CD8-positive, alpha-beta T cell (primary cell): ENCODE measurements at regions of chr11 and their contacts with region 1.

Region 1: GRCh38 chr11:130213143-130213978 is 53.8 kb downstream of the ST14 start:
- DNase-seq: peak; percentile 43 to 87 (median 71)
- ATAC-seq: peak; percentile 98
- H3K4me3 ChIP-seq: no peak overlapping the region
- H3K4me3 Mint-ChIP-seq: no peak overlapping the region
- H3K27ac ChIP-seq: no peak overlapping the region
- H3K27ac Mint-ChIP-seq: no peak overlapping the region
- H3K4me1 ChIP-seq: no peaks in the 10 kb centered on the region
- H3K4me1 Mint-ChIP-seq: no peaks in the 10 kb centered on the region
- H3K27me3 ChIP-seq: peaks cover 0 to 3% of the 10 kb centered on the region in 2 experiments
- H3K27me3 Mint-ChIP-seq: peaks cover 6% of the 10 kb centered on the region
- CTCF ChIP-seq: peak; percentile 97

Region 2: GRCh38 chr11:129992161-129992944 is 221.0 kb before region 1 on chr11:
- CTCF ChIA-PET with region 1: no interaction called
- POLR2A ChIA-PET with region 1: no interaction called
- intact Hi-C with region 1: loop called in 1 of 2 experiments (anchors 5 kb)
- DNase-seq: peak in 6 of 9 experiments; percentile 20 to 63 (median 48)
- ATAC-seq: peak; percentile 91
- H3K4me3 ChIP-seq: no peak overlapping the region
- H3K4me3 Mint-ChIP-seq: no peak overlapping the region
- H3K27ac ChIP-seq: no peak overlapping the region
- H3K27ac Mint-ChIP-seq: peak overlapping the region; percentile 46
- H3K4me1 ChIP-seq: no peaks in the 10 kb centered on the region
- H3K4me1 Mint-ChIP-seq: peaks cover 10% of the 10 kb centered on the region
- H3K27me3 ChIP-seq: no peaks in the 10 kb centered on the region
- H3K27me3 Mint-ChIP-seq: no peaks in the 10 kb centered on the region
- CTCF ChIP-seq: peak; percentile 42

Region 3: DNA sequence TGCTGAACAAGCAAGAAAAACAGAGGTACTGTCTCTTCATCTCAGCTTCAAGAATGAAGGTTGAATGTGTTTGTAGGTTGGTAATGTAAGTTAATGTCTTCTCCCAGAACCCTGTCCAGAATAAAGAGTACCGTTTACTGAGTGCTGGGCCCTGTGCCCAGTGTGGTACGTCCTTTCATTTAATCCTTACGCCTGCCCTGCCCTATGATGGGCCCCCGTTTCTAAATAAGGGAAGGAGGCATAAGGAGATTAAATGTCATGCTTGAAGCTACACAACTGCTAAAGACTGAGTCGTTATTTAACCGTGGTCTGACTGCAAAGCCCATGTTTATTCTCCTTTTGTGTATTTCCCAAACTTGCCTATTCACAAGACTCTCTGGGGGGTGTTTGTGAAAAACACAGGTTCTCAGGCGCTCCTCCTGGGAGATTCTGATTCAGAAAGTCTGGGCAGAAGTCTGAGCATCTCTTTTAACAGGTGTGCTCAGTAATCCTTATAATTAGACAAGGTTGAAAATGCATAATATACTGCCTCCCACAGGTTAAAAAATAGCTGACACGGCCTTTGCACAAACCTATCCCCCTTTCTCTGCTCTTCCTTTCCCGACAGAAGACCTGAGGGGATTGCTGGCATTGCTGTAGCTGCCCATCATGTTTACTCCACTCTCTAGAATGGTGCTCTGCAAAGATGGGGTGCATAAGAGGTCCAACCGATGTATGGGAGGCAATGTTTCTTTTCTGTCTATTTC is 157.7 kb after region 1 on chr11:
- CTCF ChIA-PET with region 1: interaction called, 17 read pairs
- POLR2A ChIA-PET with region 1: no interaction called
- intact Hi-C with region 1: loop called (anchors 1 kb)
- DNase-seq: peak in 2 of 9 experiments; percentile 12 to 29
- ATAC-seq: no peak
- H3K4me3 ChIP-seq: no peak overlapping the region
- H3K4me3 Mint-ChIP-seq: no peak overlapping the region
- H3K27ac ChIP-seq: no peak overlapping the region
- H3K27ac Mint-ChIP-seq: no peak overlapping the region
- H3K4me1 ChIP-seq: no peaks in the 10 kb centered on the region
- H3K4me1 Mint-ChIP-seq: no peaks in the 10 kb centered on the region
- H3K27me3 ChIP-seq: no peaks in the 10 kb centered on the region
- H3K27me3 Mint-ChIP-seq: no peaks in the 10 kb centered on the region
- CTCF ChIP-seq: no peak

Region 4: GRCh38 chr11:130434521-130435223 is 221.3 kb after region 1 on chr11:
- CTCF ChIA-PET with region 1: interaction called, 5 read pairs
- POLR2A ChIA-PET with region 1: no interaction called
- intact Hi-C with region 1: loop called (anchors 1 to 5 kb)
- DNase-seq: peak; percentile 31 to 86 (median 66)
- ATAC-seq: peak; percentile 92
- H3K4me3 ChIP-seq: peak overlapping the region; percentile 67 to 77
- H3K4me3 Mint-ChIP-seq: no peak overlapping the region
- H3K27ac ChIP-seq: no peak overlapping the region
- H3K27ac Mint-ChIP-seq: no peak overlapping the region
- H3K4me1 ChIP-seq: peaks cover 10% of the 10 kb centered on the region
- H3K4me1 Mint-ChIP-seq: peaks cover 15% of the 10 kb centered on the region
- H3K27me3 ChIP-seq: peaks cover 5 to 6% of the 10 kb centered on the region in 2 experiments
- H3K27me3 Mint-ChIP-seq: peaks cover 19% of the 10 kb centered on the region
- CTCF ChIP-seq: peak; percentile 89

Region 5: GRCh38 chr11:130894322-130895025 is 681.1 kb after region 1 on chr11:
- CTCF ChIA-PET with region 1: interaction called, 7 read pairs
- POLR2A ChIA-PET with region 1: no interaction called
- intact Hi-C with region 1: loop called in 1 of 2 experiments (anchors 10 kb)
- DNase-seq: peak; percentile 36 to 76 (median 62)
- ATAC-seq: peak; percentile 87
- H3K4me3 ChIP-seq: no peak overlapping the region
- H3K4me3 Mint-ChIP-seq: no peak overlapping the region
- H3K27ac ChIP-seq: no peak overlapping the region
- H3K27ac Mint-ChIP-seq: no peak overlapping the region
- H3K4me1 ChIP-seq: no peaks in the 10 kb centered on the region
- H3K4me1 Mint-ChIP-seq: peaks cover 4% of the 10 kb centered on the region
- H3K27me3 ChIP-seq: no peaks in the 10 kb centered on the region
- H3K27me3 Mint-ChIP-seq: no peaks in the 10 kb centered on the region
- CTCF ChIP-seq: peak; percentile 94

Region 6: DNA sequence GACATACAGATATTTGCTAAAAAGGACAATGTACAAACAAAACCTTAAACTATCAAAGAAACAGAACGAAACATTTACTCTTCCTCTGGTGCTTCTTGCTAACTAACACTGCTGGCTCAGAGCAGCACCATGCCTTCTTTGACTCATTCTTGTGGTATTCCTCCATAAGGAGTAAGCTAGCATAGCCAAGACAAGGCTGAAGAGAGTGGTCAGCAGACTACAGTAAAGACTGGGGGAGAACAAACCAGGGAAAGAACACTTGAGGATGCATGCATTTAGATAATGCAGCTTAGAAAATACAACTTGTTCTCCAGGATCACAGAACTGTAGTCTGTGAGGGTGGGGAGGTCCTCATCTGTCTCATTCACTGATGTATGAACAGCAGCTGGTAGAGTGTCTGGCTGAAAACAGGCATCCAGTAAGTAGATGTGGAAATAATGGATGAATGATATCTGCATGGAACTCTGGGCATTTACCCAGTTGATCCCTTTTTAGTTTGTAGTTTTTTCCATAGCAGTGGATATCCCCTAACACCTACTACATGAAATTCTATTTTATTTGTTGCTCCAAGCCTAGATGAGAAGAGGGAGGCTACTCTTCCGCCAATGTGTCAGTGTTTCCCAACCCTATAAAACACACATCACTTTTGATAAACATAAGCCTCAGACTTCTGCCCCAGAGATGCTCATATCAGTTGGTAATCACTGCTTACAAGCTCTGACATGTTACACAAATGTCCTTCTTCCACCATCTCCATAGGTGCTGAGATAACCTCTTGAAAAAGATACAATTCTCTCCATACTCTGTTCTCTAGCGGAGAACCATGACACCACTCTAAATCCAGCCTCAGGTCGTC is 695.6 kb after region 1 on chr11:
- CTCF ChIA-PET with region 1: no interaction called
- POLR2A ChIA-PET with region 1: no interaction called
- intact Hi-C with region 1: no loop called
- DNase-seq: no peak
- ATAC-seq: no peak
- H3K4me3 ChIP-seq: no peak overlapping the region
- H3K4me3 Mint-ChIP-seq: no peak overlapping the region
- H3K27ac ChIP-seq: no peak overlapping the region
- H3K27ac Mint-ChIP-seq: no peak overlapping the region
- H3K4me1 ChIP-seq: no peaks in the 10 kb centered on the region
- H3K4me1 Mint-ChIP-seq: peaks cover 34% of the 10 kb centered on the region
- H3K27me3 ChIP-seq: no peaks in the 10 kb centered on the region
- H3K27me3 Mint-ChIP-seq: no peaks in the 10 kb centered on the region
- CTCF ChIP-seq: no peak

Region 7: DNA sequence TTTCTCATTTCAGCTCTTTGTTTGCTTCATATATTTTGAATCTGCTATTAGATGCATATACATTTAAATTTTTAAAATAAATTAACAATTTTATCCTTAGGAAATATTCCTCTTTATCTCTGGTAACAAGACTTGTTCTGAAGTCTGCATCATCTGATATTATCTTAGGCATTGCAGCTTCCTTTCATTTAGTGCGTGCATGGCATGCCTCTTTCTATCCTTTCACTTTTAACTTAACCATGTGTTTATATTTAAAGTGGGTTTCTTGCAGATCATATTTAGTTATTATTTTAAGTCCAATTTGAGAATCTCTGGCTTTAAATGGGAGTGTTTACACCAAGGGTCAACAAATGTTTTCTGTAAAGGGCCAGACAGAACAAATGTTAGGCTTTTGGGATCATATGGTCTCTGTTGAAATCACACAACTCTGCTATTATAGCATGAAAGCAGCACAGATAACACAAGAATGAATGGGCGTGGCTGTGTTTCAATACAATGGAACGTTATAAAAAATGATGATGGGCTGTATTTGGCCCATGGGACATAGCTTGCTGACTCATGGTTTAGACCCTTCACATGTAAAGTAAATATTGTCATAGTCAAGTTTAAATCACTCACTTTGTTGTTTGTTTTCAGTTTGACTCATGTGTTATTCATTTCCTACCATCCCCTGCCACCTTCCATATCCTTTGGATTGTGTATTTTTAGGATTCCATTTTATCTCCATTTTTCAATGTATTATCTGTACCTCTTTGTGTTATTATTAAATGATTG is 786.8 kb after region 1 on chr11:
- CTCF ChIA-PET with region 1: no interaction called
- POLR2A ChIA-PET with region 1: no interaction called
- intact Hi-C with region 1: no loop called
- DNase-seq: no peak
- ATAC-seq: no peak
- H3K4me3 ChIP-seq: no peak overlapping the region
- H3K4me3 Mint-ChIP-seq: no peak overlapping the region
- H3K27ac ChIP-seq: no peak overlapping the region
- H3K27ac Mint-ChIP-seq: no peak overlapping the region
- H3K4me1 ChIP-seq: no peaks in the 10 kb centered on the region
- H3K4me1 Mint-ChIP-seq: no peaks in the 10 kb centered on the region
- H3K27me3 ChIP-seq: no peaks in the 10 kb centered on the region
- H3K27me3 Mint-ChIP-seq: no peaks in the 10 kb centered on the region
- CTCF ChIP-seq: no peak